Activated T-helper 1 cell treated with anti-CD3 and anti-CD28 coated beads, Interleukin-12 subunit alpha, Interleukin-12 subunit beta, Interleukin-2, Interleukin-4 antibody, amounts not matched to agents 30 ng/mL and 10 ng/mL and 1 ng/mL, durations not matched to agents 14 hours and 24 hours and 36 hours (primary cell): ENCODE measurements at regions of chr1 and their contacts with region 1.

Region 1: DNA sequence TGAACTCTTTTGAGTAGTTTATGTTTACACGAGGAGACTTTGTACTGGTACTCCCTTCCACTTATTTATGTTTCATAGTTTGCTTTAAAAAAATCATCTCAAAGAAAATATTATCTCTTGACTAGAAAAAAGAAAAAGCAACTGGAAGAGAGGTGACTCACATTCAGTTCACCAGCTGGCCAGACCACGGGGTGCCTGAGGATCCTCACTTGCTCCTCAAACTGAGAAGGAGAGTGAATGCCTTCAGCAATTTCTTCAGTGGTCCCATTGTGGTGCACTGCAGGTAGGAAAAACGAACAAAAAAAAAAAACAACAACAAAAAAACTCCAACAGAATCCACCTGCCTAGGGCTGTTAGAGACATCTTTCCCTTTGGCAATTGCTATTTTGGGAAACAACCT is 102.9 kb downstream of the PTPRC start:
- DNase-seq: no peak
- H3K4me3 Mint-ChIP-seq: no peak overlapping the region
- H3K27ac Mint-ChIP-seq: no peak overlapping the region
- H3K4me1 Mint-ChIP-seq: peaks cover 59% of the 10 kb centered on the region
- H3K27me3 Mint-ChIP-seq: no peaks in the 10 kb centered on the region

Region 2: GRCh38 chr1:198756470-198756869 is 14.7 kb after region 1 on chr1:
- intact Hi-C with region 1: loop called (anchors 2 kb)
- DNase-seq: no peak
- H3K4me3 Mint-ChIP-seq: no peak overlapping the region
- H3K27ac Mint-ChIP-seq: no peak overlapping the region
- H3K4me1 Mint-ChIP-seq: peaks cover 6% of the 10 kb centered on the region
- H3K27me3 Mint-ChIP-seq: no peaks in the 10 kb centered on the region

Region 3: DNA sequence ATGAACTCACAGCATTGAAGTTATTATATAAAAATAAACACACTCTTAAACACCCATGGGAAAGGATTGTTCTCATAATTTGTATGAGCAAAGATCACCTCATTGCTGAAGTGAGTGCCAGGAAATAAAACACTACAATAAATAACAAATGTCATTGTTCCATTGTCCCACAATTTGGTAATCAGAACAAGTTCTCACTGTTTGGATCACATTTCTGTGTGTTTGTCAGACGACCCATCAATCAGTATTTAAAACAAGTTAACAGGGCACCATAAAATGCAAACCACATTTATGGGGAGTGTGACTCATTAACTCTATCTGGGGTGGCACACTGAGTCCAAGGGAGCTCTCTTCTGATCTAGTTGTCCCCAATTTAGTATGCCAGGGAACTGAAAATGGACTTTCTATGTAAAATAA is 21.6 kb after region 1 on chr1:
- intact Hi-C with region 1: loop called (anchors 2 kb)
- DNase-seq: no peak
- H3K4me3 Mint-ChIP-seq: no peak overlapping the region
- H3K27ac Mint-ChIP-seq: no peak overlapping the region
- H3K4me1 Mint-ChIP-seq: peaks cover 29% of the 10 kb centered on the region
- H3K27me3 Mint-ChIP-seq: no peaks in the 10 kb centered on the region

Region 4: DNA sequence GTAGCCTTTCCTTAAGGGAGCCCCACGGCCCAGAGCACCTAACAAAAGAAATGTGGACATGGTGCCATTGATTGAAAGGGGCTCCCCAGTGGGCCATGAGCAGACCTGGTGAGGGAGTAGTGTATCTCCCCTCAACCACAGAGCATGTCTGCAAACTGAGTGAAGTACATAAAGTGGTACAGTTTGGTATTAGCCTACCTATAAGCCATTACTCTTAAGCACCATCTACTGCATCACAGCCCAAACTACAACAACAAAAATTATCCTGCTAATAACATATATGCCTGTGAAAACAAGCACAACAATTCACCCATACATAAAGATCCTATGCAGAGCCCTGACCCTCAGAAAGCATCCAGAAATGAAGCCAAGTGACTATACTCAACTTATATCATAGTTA is 304.9 kb after region 1 on chr1:
- intact Hi-C with region 1: no loop called
- DNase-seq: no peak
- H3K4me3 Mint-ChIP-seq: no peak overlapping the region
- H3K27ac Mint-ChIP-seq: no peak overlapping the region
- H3K4me1 Mint-ChIP-seq: peaks cover 24% of the 10 kb centered on the region
- H3K27me3 Mint-ChIP-seq: no peaks in the 10 kb centered on the region